Naive thymus-derived CD4-positive, alpha-beta T cell (primary cell): ENCODE measurements at regions of chr1 and their contacts with region 1.

Region 1: DNA sequence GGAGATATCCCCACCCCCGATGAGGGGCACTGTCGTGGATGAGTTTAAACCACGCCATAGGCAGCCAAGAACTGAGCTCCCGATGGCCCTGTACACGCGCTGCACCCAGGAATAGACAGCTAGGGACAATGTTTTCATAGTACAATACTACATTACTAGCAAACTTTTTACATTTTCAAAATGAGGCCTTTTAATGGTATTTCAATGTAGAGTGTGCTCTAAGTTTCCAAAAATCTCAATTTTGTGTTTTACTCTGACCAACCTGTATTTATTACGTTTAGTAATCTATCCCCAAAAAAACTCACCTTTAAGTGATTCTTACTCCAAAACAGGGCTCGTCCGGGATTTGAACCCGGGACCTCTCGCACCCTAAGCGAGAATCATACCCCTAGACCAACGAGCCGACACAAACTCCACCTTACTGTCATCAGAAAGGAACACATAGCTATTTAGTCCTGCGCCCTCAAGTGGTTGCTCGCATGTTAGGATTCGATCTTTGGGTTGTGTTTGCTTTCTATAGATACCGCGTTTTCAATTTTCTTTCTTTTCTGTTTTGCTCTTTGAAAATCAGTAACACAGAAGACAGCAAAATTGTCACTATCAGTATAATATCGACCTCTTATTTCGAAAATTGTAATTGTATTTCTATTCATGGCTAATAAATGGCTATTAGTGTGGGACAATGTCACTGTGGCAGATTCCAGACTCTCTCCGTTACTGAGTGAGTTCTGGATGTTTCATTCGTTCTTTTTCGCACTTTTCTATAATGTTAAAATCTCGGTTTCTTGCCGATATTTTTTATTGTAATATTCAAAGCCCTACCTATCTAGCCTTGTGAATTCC is 6.4 kb upstream of the MPZL1 start:
- DNase-seq: peak; percentile 66 to 91 (median 89)
- ATAC-seq: peak; percentile 81
- H3K4me3 ChIP-seq: peak overlapping the region; percentile 88
- H3K4me3 Mint-ChIP-seq: peak overlapping the region; percentile 89 to 98 (median 93)
- H3K27ac ChIP-seq: peak overlapping the region; percentile 48
- H3K27ac Mint-ChIP-seq: peak overlapping the region; percentile 87 to 100 (median 98)
- H3K4me1 ChIP-seq: peaks cover 4 to 13% of the 10 kb centered on the region in 2 donors
- H3K4me1 Mint-ChIP-seq: peaks cover 26 to 53% (median 45%) of the 10 kb centered on the region in 7 donors
- H3K27me3 ChIP-seq: no peaks in the 10 kb centered on the region
- H3K27me3 Mint-ChIP-seq: peaks cover 0 to 16% (median 0%) of the 10 kb centered on the region in 5 donors

Region 2: GRCh38 chr1:167447521-167448136 is 267.7 kb before region 1 on chr1:
- CTCF ChIA-PET with region 1: no interaction called
- POLR2A ChIA-PET with region 1: interaction called, 11 read pairs
- intact Hi-C with region 1: loop called in 1 of 2 experiments (anchors 10 kb)
- DNase-seq: peak; percentile 42 to 91 (median 83)
- ATAC-seq: peak; percentile 88
- H3K4me3 ChIP-seq: peak overlapping the region; percentile 38
- H3K4me3 Mint-ChIP-seq: peak overlapping the region; percentile 72 to 90 (median 82)
- H3K27ac ChIP-seq: peak overlapping the region; percentile 89
- H3K27ac Mint-ChIP-seq: peak overlapping the region; percentile 90 to 99 (median 97)
- H3K4me1 ChIP-seq: peaks cover 71 to 83% of the 10 kb centered on the region in 2 donors
- H3K4me1 Mint-ChIP-seq: peaks cover 56 to 97% (median 82%) of the 10 kb centered on the region in 7 donors
- H3K27me3 ChIP-seq: no peaks in the 10 kb centered on the region
- H3K27me3 Mint-ChIP-seq: no peaks in the 10 kb centered on the region

Region 3: DNA sequence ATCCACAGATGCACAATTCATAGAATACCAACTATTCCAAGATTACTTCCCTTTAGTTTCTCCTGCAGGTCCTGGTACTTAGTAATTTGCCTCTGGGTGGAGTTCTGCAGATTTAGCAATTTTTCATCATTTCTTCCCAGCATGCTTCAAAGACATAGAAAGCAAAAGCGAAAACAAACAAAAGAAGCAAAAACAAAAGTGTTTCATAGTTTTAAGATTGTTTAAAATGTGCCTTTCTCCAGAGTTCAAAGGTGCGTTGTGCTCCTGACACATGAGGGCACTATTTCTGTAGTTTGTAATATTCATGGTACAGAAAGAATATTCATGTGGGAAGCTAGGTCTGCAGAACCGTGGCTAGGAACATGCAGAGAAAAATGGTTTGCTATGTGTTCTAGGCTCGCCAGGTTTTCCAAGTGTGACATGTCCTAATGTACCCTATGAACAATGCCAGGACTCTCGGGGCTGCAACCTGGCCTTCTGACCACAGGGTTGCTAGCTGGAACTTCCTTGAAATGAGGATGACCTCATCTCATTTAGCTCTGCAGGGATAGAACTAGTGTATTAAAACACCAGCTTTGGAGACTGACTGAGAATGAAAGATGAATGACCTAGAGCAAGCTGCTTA is 115.3 kb before region 1 on chr1:
- CTCF ChIA-PET with region 1: interaction called, 7 read pairs
- POLR2A ChIA-PET with region 1: no interaction called
- intact Hi-C with region 1: loop called (anchors 1 kb)
- DNase-seq: peak in 8 of 9 donors; percentile 35 to 76 (median 60)
- ATAC-seq: peak; percentile 80
- H3K4me3 ChIP-seq: no peak overlapping the region
- H3K4me3 Mint-ChIP-seq: peak overlapping the region; percentile 9 to 80 (median 62)
- H3K27ac ChIP-seq: no peak overlapping the region
- H3K27ac Mint-ChIP-seq: peak overlapping the region in 8 of 9 donors; percentile 8 to 79 (median 36)
- H3K4me1 ChIP-seq: peaks cover 28 to 36% of the 10 kb centered on the region in 2 donors
- H3K4me1 Mint-ChIP-seq: peaks cover 27 to 50% (median 46%) of the 10 kb centered on the region in 7 donors
- H3K27me3 ChIP-seq: no peaks in the 10 kb centered on the region
- H3K27me3 Mint-ChIP-seq: peaks cover 0 to 3% (median 0%) of the 10 kb centered on the region in 5 donors

Region 4: GRCh38 chr1:167687919-167688519 is 27.4 kb before region 1 on chr1:
- CTCF ChIA-PET with region 1: interaction called, 17 read pairs
- POLR2A ChIA-PET with region 1: no interaction called
- intact Hi-C with region 1: no loop called
- DNase-seq: peak; percentile 47 to 81 (median 71)
- ATAC-seq: peak; percentile 84
- H3K4me3 ChIP-seq: no peak overlapping the region
- H3K4me3 Mint-ChIP-seq: no peak overlapping the region
- H3K27ac ChIP-seq: no peak overlapping the region
- H3K27ac Mint-ChIP-seq: peak overlapping the region in 7 of 9 donors; percentile 19 to 82 (median 60)
- H3K4me1 ChIP-seq: no peaks in the 10 kb centered on the region
- H3K4me1 Mint-ChIP-seq: peaks cover 10 to 29% (median 25%) of the 10 kb centered on the region in 7 donors
- H3K27me3 ChIP-seq: no peaks in the 10 kb centered on the region
- H3K27me3 Mint-ChIP-seq: no peaks in the 10 kb centered on the region

Region 5: DNA sequence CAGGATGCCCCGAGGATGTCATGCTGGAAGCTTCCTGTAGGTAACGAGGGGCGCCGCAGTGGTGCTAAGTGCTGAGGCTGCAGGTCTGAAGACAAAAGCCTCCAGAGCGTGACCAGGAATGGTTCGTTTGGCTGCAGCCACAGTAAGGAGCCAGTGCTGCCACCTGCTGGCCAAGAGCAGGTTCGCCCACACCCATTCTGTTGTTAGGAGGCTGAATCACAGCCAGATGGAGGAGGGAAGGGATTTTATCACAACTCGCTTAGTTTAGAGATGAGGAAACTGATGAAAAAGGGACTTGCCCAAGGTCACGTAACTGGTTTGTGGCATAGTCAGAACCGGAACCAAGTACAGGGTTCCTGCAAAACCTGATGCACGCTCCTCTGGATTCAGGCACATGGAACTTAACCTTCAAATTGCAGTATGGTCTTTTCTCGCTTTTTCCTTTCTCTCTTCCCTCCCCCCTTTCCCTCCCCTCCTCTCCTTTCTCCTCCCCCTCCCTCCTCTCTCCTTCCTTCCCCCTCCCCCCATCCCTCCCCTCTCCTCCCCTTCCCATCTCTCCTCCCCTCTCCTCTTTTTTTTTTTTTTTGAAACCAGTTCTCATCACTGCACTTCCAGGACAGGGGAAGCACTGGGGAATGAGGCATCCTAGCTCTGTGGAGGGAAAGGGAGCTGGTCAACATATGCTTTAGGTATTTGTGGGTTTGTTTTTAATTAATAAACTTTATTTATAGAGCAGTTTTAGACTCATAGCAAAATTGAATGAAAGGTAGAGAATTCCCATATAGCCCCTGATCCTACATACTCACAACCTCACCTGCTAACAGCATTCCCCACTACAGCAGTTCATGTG is 88.2 kb after region 1 on chr1:
- CTCF ChIA-PET with region 1: no interaction called
- POLR2A ChIA-PET with region 1: no interaction called
- intact Hi-C with region 1: loop called (anchors 1 kb)
- DNase-seq: peak; percentile 41 to 83 (median 67)
- ATAC-seq: peak; percentile 95
- H3K4me3 ChIP-seq: no peak overlapping the region
- H3K4me3 Mint-ChIP-seq: peak overlapping the region in 9 of 10 donors; percentile 5 to 74 (median 60)
- H3K27ac ChIP-seq: no peak overlapping the region
- H3K27ac Mint-ChIP-seq: peak overlapping the region in 6 of 9 donors; percentile 38 to 93 (median 83)
- H3K4me1 ChIP-seq: peaks cover 20 to 21% of the 10 kb centered on the region in 2 donors
- H3K4me1 Mint-ChIP-seq: peaks cover 16 to 29% (median 26%) of the 10 kb centered on the region in 7 donors
- H3K27me3 ChIP-seq: no peaks in the 10 kb centered on the region
- H3K27me3 Mint-ChIP-seq: peaks cover 0 to 7% (median 0%) of the 10 kb centered on the region in 5 donors

Region 6: DNA sequence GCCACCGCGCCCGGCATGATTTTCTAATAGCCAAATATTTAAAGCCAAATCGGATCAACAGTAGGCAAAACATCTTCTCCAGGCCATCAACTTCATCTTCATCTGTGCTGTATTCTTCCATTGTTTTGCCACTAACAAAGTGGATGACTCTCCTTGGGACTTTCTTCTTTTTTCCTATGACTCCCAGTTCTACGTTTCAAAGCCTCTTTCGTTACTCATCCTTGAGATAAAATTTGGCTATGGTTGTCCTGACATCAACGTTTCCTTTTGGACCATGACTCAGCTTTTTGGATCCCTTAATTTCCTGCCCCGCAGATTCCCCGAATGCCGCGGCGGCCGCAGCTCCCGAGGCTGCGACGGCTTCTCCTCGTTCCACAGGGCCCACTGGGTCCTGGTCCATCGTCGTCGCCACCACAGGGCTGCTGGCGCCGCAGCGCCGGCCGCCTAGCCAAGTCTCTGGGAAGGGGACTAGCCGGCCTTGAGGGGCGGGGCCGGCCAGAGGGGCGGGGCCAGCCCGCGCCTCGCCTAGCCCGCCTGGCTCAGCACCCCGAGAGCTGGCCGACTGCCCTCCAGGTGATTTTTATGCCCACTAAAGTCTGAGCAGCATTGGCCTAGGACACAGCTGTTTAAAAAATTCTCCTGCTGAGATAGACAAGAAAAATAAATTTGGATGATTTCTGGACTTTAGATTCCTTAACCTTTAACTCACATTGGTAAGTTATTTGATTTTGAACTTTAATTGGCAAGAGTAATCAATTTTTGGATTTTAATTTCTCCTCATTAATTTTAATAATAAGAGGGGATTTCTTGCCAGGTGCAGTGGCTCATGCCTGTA is 104.7 kb after region 1 on chr1:
- CTCF ChIA-PET with region 1: no interaction called
- POLR2A ChIA-PET with region 1: no interaction called
- intact Hi-C with region 1: no loop called
- DNase-seq: peak in 1 of 9 donors; percentile 47
- ATAC-seq: peak; percentile 71
- H3K4me3 ChIP-seq: no peak overlapping the region
- H3K4me3 Mint-ChIP-seq: peak overlapping the region in 9 of 10 donors; percentile 15 to 76 (median 60)
- H3K27ac ChIP-seq: no peak overlapping the region
- H3K27ac Mint-ChIP-seq: peak overlapping the region in 1 of 9 donors; percentile 65
- H3K4me1 ChIP-seq: no peaks in the 10 kb centered on the region
- H3K4me1 Mint-ChIP-seq: peaks cover 0 to 18% (median 4%) of the 10 kb centered on the region in 7 donors
- H3K27me3 ChIP-seq: no peaks in the 10 kb centered on the region
- H3K27me3 Mint-ChIP-seq: peaks cover 8 to 22% (median 20%) of the 10 kb centered on the region in 5 donors

Region 7: GRCh38 chr1:169485544-169486278 is 1770.3 kb after region 1 on chr1 and contains the start of gene SLC19A2:
- CTCF ChIA-PET with region 1: no interaction called
- POLR2A ChIA-PET with region 1: no interaction called
- intact Hi-C with region 1: loop called in 1 of 2 experiments (anchors 5 kb)
- DNase-seq: peak; percentile 79 to 94 (median 89)
- ATAC-seq: peak; percentile 99
- H3K4me3 ChIP-seq: peak within 1 kb of the TSS; percentile 66
- H3K4me3 Mint-ChIP-seq: peak within 1 kb of the TSS; percentile 87 to 98 (median 94)
- H3K27ac ChIP-seq: peak within 1 kb of the TSS; percentile 81
- H3K27ac Mint-ChIP-seq: peak within 1 kb of the TSS; percentile 86 to 98 (median 94)
- H3K4me1 ChIP-seq: peaks cover 4 to 12% of the 10 kb centered on the region in 2 donors
- H3K4me1 Mint-ChIP-seq: peaks cover 35 to 56% (median 46%) of the 10 kb centered on the region in 7 donors
- H3K27me3 ChIP-seq: no peaks in the 10 kb centered on the region
- H3K27me3 Mint-ChIP-seq: peaks cover 0 to 8% (median 0%) of the 10 kb centered on the region in 5 donors
- total RNA-seq, gene SLC19A2: 3.7 to 5.9 (median 4.8) TPM